GM12878 (cell line): ENCODE measurements at regions of chr7 and their contacts with region 1.

Region 1: GRCh38 chr7:13742811-13743210 is 246.7 kb downstream of the ETV1 start:
- DNase-seq: no peak
- ATAC-seq: peak; percentile 61
- H3K4me3 ChIP-seq: no peak overlapping the region
- H3K27ac ChIP-seq: no peak overlapping the region
- H3K4me1 ChIP-seq: no peaks in the 10 kb centered on the region
- H3K27me3 ChIP-seq: no peaks in the 10 kb centered on the region
- CTCF ChIP-seq: peak in 1 of 3 experiments; percentile 39; a peak in 1 of 6 replicates
- EP300 ChIP-seq: no peak
- POLR2A ChIP-seq: no peak
- RAD21 ChIP-seq: peak; percentile 17; the same call in 1 of the 2 replicates

Region 2: DNA sequence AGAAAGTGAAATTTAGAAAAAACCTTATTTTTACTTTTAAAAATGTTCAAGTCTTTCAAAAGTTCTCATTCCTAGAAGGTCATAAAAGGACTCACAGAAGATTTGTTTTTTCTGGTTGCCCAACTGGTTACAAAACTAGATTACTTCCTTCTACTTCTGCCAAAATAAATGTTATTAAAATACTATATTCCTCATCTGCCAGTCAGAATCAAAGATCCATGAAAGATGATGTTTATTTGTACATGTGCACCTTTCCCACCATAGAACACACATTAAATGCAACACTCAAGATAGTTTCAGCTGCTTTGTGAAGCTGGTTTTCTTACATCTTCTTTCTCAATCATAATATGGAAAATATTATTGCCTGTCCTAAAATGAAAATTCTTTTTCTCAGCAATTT is 218.7 kb before region 1 on chr7:
- CTCF ChIA-PET with region 1: interaction called, 11 read pairs
- POLR2A ChIA-PET with region 1: no interaction called
- RAD21 ChIA-PET with region 1: no interaction called
- SMC1A ChIA-PET with region 1: no interaction called
- in situ Hi-C with region 1: no loop called
- intact Hi-C with region 1: loop called (anchors 5 kb)
- DNase-seq: no peak
- ATAC-seq: no peak
- H3K4me3 ChIP-seq: no peak overlapping the region
- H3K27ac ChIP-seq: no peak overlapping the region
- H3K4me1 ChIP-seq: no peaks in the 10 kb centered on the region
- H3K27me3 ChIP-seq: no peaks in the 10 kb centered on the region
- CTCF ChIP-seq: no peak
- EP300 ChIP-seq: no peak
- POLR2A ChIP-seq: no peak
- RAD21 ChIP-seq: no peak

Region 3: DNA sequence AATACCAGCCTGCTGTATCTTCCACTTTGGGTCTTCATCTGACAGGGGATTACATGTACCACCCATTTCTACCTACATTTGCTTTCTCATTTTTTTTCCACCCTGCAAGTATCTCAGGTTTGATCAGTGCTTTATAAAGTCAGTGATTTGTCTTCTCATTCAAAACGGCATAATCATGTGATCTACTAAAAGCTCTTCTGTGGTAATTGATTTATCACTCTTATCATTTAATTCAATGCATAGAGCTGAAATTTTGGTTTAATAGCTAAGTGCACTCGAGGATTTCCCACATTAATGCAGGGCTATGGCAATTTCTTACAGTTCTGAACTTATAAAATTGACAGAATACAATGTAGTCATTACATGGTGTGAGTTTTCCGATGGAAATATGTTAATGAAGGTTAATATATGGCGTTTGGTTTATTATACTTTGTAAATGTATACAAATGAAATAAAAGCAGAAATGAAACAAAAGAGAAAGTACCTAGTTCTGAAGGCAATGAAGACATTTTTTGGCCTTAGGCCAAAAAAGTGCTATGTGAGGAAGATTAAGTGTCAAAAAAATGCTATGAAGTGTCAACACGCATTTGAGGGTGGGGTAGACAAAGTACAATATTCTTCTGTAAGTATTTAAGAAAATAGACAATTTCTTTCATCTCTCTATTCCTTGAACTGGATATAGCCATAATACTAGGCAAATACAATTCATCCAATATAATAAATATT is 210.6 kb before region 1 on chr7:
- CTCF ChIA-PET with region 1: no interaction called
- POLR2A ChIA-PET with region 1: no interaction called
- RAD21 ChIA-PET with region 1: no interaction called
- SMC1A ChIA-PET with region 1: no interaction called
- in situ Hi-C with region 1: no loop called
- intact Hi-C with region 1: loop called (anchors 5 kb)
- DNase-seq: no peak
- ATAC-seq: no peak
- H3K4me3 ChIP-seq: no peak overlapping the region
- H3K27ac ChIP-seq: no peak overlapping the region
- H3K4me1 ChIP-seq: no peaks in the 10 kb centered on the region
- H3K27me3 ChIP-seq: no peaks in the 10 kb centered on the region
- CTCF ChIP-seq: no peak
- EP300 ChIP-seq: no peak
- POLR2A ChIP-seq: no peak
- RAD21 ChIP-seq: no peak

Region 4: GRCh38 chr7:13542451-13542850 is 200.4 kb before region 1 on chr7:
- CTCF ChIA-PET with region 1: no interaction called
- POLR2A ChIA-PET with region 1: no interaction called
- RAD21 ChIA-PET with region 1: no interaction called
- SMC1A ChIA-PET with region 1: no interaction called
- in situ Hi-C with region 1: no loop called
- intact Hi-C with region 1: no loop called
- DNase-seq: no peak
- ATAC-seq: no peak
- H3K4me3 ChIP-seq: no peak overlapping the region
- H3K27ac ChIP-seq: no peak overlapping the region
- H3K4me1 ChIP-seq: no peaks in the 10 kb centered on the region
- H3K27me3 ChIP-seq: no peaks in the 10 kb centered on the region
- CTCF ChIP-seq: no peak
- EP300 ChIP-seq: no peak
- POLR2A ChIP-seq: no peak
- RAD21 ChIP-seq: no peak